ENCODE measurements at regions of chr4 and their contacts with region 1.

Region 1: GRCh38 chr4:99885063-99885664 is 9.1 kb downstream of the LAMTOR3 start:
- DNase-seq: peak; percentile 34
- H3K4me3 ChIP-seq: no peak overlapping the region
- H3K27ac ChIP-seq: no peak overlapping the region
- H3K4me1 ChIP-seq: no peaks in the 10 kb centered on the region
- H3K27me3 ChIP-seq: no peaks in the 10 kb centered on the region
- CTCF ChIP-seq: peak; percentile 60 to 61

Region 2: DNA sequence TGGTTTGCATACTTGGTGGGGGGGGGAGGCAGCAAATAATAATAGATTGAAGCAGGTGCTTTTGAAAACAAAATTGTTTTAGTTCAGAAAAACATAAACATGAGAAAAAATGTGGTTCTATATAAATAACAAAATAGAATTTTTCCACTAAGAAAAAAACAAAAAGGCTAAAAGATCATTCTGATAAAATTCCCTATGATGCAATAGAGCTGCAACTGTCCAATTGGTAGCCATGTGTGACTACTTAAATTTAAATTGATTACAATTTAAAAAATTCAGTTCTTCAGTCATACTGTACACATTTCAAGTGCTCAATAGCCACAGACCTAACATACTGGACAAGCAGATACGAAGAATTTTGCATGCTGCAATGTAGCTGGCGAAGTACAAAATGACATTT is 332.3 kb before region 1 on chr4:
- CTCF ChIA-PET with region 1: no interaction called
- dilution Hi-C with region 1: no loop called
- in situ Hi-C with region 1: loop called in 1 of 2 experiments (anchors 10 kb)
- intact Hi-C with region 1: no loop called
- DNase-seq: no peak
- H3K4me3 ChIP-seq: no peak overlapping the region
- H3K27ac ChIP-seq: no peak overlapping the region
- H3K4me1 ChIP-seq: no peaks in the 10 kb centered on the region
- H3K27me3 ChIP-seq: no peaks in the 10 kb centered on the region
- CTCF ChIP-seq: no peak

Region 3: GRCh38 chr4:99808260-99808857 is 76.8 kb before region 1 on chr4:
- CTCF ChIA-PET with region 1: interaction called, 3 read pairs
- dilution Hi-C with region 1: no loop called
- in situ Hi-C with region 1: loop called (anchors 5 kb)
- intact Hi-C with region 1: loop called (anchors 1 kb)
- DNase-seq: peak; percentile 58
- H3K4me3 ChIP-seq: no peak overlapping the region
- H3K27ac ChIP-seq: no peak overlapping the region
- H3K4me1 ChIP-seq: no peaks in the 10 kb centered on the region
- H3K27me3 ChIP-seq: peaks cover 3% of the 10 kb centered on the region
- CTCF ChIP-seq: peak; percentile 81 to 90

Measured in mammary epithelial cell (primary cell).